Vagina (tissue), 2 donors: ENCODE measurements at regions of chr9 and their contacts with region 1.

Region 1: DNA sequence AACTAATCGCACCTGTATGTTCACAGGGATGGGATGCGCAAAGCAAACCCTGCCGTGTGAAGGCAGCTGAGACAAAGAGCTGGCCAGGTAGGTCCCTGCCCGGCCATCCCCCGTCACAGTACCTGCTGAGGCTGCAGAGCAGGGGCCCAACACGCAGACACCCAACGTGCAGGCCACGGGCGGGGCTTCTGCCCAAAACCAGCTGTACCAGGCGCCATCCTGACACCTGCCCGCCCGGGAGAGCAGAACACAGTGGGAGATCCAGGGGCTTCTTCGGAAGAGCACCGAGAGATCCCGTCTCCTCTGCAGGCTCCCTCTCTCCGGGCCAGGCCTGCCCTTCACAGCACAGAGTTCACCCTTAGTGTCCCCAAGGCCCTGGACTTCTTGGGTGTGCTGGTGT is 28.4 kb downstream of the ABO start:
- DNase-seq: peak; percentile 61 to 62
- H3K4me3 ChIP-seq: no peak overlapping the region
- H3K27ac ChIP-seq: no peak overlapping the region
- H3K4me1 ChIP-seq: peaks cover under 1% of the 10 kb centered on the region
- H3K27me3 ChIP-seq: no peaks in the 10 kb centered on the region
- CTCF ChIP-seq: no peak
- POLR2A ChIP-seq: no peak

Region 2: DNA sequence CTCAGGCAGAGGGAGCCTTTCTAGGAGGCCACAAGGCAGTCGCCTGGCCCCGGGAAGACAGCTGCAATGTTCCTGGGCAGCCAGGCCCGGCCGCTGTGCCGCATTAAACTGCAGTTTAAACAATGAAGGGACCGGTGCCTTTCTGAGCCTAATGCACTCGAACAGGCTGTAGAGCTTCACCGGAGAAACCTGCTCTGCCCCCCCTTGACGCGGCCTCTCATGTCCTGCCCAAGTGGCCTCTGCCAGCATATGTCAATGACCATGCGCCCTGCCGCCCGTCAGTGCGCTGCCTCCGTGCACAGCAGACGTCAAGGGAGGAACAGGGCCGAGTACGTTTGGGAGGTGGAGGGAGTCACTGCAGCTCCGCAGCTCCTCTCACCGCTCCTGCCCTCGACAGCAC is 702.6 kb before region 1 on chr9:
- intact Hi-C with region 1: no loop called
- DNase-seq: no peak
- H3K4me3 ChIP-seq: no peak overlapping the region
- H3K27ac ChIP-seq: no peak overlapping the region
- H3K4me1 ChIP-seq: peaks cover 7% of the 10 kb centered on the region
- H3K27me3 ChIP-seq: no peaks in the 10 kb centered on the region
- CTCF ChIP-seq: no peak
- POLR2A ChIP-seq: no peak

Region 3: GRCh38 chr9:134536101-134536900 is 1289.7 kb after region 1 on chr9:
- intact Hi-C with region 1: loop called (anchors 5 kb)
- DNase-seq: no peak
- H3K4me3 ChIP-seq: no peak overlapping the region
- H3K27ac ChIP-seq: peak overlapping the region; percentile 82
- H3K4me1 ChIP-seq: peaks cover 61% of the 10 kb centered on the region
- H3K27me3 ChIP-seq: no peaks in the 10 kb centered on the region
- CTCF ChIP-seq: no peak
- POLR2A ChIP-seq: no peak